Thyroid gland (tissue), 4 donors: ENCODE measurements at regions of chr1 and their contacts with region 1.

Region 1: GRCh38 chr1:230797942-230798418 is 50.8 kb downstream of the CAPN9 start:
- DNase-seq: peak; percentile 72 to 80
- H3K4me3 ChIP-seq: no peak overlapping the region
- H3K27ac ChIP-seq: no peak overlapping the region
- H3K4me1 ChIP-seq: peaks cover 8 to 14% of the 10 kb centered on the region in 2 donors
- H3K27me3 ChIP-seq: no peaks in the 10 kb centered on the region
- CTCF ChIP-seq: peak; percentile 47 to 82 (median 78)
- POLR2A ChIP-seq: no peak

Region 2: GRCh38 chr1:230917284-230918135 is 119.5 kb after region 1 on chr1:
- intact Hi-C with region 1: loop called (anchors 5 kb)
- DNase-seq: peak; percentile 79 to 87
- H3K4me3 ChIP-seq: no peak overlapping the region
- H3K27ac ChIP-seq: no peak overlapping the region
- H3K4me1 ChIP-seq: no peaks in the 10 kb centered on the region
- H3K27me3 ChIP-seq: no peaks in the 10 kb centered on the region
- CTCF ChIP-seq: peak in 5 of 6 experiments; percentile 51 to 72 (median 51)
- POLR2A ChIP-seq: no peak

Region 3: GRCh38 chr1:230978491-230979388 is 180.8 kb after region 1 on chr1 and contains the starts of genes ARV1 and TTC13:
- intact Hi-C with region 1: loop called (anchors 5 kb)
- DNase-seq: peak; percentile 100
- H3K4me3 ChIP-seq: peak within 1 kb of the TSS; percentile 69 to 87 (median 70)
- H3K27ac ChIP-seq: peak within 1 kb of the TSS in 2 of 3 donors; percentile 35 to 56
- H3K4me1 ChIP-seq: peaks cover 10 to 16% of the 10 kb centered on the region in 2 donors
- H3K27me3 ChIP-seq: no peaks in the 10 kb centered on the region
- CTCF ChIP-seq: peak in 4 of 6 experiments; percentile 27 to 48 (median 34)
- POLR2A ChIP-seq: peak; percentile 33 to 89
- total RNA-seq, gene ARV1: 29.3 to 39.2 (median 34.8) TPM
- total RNA-seq, gene TTC13: 14.4 to 28.5 (median 26.1) TPM

Region 4: GRCh38 chr1:231211005-231211857 is 413.3 kb after region 1 on chr1:
- intact Hi-C with region 1: loop called (anchors 5 kb)
- DNase-seq: peak; percentile 83 to 89
- H3K4me3 ChIP-seq: peak overlapping the region in 1 of 3 donors; percentile 27
- H3K27ac ChIP-seq: no peak overlapping the region
- H3K4me1 ChIP-seq: peaks cover 0 to 9% of the 10 kb centered on the region in 2 donors
- H3K27me3 ChIP-seq: no peaks in the 10 kb centered on the region
- CTCF ChIP-seq: peak; percentile 55 to 94 (median 88)
- POLR2A ChIP-seq: no peak